ENCODE measurements at regions of chr1 and their contacts with region 1.

Region 1: DNA sequence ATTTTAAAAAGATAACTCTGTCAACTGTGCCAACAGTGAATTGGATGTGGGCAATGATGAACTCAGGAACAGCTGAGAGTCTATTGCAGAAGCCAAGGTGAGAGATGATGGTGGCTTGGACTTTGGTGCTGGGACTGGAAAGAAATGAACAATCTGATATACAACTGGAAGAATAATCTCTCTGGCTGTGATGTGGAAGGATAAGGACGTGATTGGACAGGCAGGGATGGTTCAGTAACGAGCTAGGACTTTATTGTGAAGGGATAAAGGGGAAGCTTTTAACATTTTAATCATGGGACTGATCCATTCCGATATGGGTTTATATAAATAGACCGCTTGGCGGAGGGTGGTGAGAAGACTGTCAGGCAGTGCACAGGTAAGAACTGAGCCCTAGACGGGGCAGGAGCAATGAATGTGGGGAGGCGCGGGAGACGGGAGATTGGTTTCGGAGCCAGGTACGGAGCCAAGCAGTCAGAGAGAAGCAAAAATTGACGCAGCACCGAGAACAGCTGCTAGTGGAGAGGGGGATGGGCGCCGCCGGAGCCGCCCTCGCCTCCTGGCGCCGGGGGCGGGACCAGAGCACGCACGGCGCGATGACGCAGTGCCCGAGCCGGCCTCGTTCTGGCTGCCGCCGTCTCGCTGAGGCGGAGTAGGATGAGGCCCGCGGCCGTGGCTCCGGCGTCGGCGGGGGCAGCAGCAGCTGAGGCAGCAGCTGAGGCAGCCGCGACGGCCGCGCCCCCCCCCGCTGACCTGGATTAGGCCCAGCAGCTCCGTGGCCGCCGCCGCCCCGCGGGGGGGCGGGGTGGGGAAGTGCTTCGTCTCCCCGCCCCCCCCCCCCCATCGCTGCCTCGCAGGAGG is at the start of gene RNF11:
- DNase-seq: peak; percentile 89 to 99 (median 92)

Region 2: DNA sequence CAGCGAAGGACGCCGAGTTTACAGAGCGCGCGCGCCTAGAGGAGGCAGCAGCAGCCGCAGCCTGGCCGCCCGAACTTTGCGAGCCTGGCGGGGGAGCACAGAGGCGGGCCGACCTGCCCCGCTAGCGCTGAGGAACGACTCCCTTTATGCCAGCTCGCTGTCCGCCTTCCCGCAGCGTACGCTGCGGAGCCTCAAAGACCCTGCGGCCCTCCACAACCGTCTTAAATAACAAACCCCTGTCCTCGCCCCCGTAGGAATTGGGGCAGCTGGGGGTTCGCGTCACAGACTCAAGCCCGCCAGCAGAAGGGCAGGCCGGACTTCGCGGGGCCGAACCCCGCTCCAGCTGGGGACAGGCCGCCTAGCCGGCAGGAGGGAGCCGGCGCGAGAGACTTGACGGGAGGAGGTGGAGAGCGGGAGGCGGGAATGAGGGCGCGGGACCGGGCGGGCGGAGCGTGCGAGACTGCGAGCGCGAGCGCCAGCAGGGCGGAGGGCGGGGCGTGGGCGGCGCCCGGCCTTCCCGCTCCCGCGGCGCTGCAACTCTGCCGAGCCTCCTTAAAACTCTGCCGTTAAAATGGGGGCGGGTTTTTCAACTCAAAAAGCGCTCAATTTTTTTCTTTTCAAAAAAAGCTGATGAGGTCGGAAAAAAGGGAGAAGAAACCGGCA is 267.6 kb before region 1 on chr1:
- intact Hi-C with region 1: loop called (anchors 5 kb)
- DNase-seq: peak; percentile 77 to 97 (median 85)

Region 3: DNA sequence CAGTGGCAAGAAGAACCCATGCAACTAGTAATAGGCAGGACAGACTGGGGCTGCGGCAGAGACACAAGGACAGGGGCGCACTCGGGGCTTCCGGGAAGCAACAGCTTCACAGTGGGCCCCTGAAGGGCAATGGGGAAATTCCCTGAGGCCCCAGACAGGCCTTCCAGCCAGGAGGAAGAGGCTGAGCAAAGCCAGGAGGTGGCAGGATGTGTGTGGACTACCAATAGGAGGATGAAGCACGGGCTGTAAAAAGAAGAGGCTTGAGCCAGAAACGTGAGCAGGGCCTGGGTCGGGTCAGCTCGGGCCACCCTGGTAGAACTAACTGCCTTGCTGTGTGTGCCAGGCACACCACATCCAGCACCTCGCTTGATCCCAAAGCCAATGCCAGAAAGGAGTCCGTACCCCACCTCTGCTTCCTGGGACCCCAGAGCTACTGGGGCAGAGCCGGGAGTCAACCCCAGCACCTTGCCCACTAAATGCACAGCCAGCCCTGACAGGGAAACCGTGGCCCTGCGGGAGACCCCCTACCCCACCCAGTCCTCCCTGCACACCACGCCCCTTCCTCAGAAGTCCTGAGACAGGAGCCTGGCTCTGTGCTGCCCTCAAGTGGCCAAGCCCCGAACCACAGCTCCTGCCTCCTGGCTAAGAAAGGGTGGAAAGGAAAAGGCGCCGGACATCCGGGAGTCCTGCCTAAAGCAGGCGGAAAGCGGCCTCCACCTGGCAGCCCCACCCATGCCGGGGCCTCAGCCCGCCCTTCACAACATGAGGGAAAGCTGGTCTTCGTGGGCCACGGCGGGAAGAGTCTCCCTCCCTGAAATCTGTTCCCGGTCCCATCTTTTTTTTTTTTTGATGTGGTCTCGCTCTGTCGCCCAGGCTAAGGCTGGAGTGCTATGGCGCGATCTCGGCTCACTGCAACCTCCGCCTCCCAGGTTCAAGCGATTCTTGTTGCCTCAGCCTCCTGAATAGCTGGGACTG is 60.8 kb after region 1 on chr1:
- intact Hi-C with region 1: loop called (anchors 5 kb)
- DNase-seq: peak; percentile 75 to 98 (median 86)

Region 4: DNA sequence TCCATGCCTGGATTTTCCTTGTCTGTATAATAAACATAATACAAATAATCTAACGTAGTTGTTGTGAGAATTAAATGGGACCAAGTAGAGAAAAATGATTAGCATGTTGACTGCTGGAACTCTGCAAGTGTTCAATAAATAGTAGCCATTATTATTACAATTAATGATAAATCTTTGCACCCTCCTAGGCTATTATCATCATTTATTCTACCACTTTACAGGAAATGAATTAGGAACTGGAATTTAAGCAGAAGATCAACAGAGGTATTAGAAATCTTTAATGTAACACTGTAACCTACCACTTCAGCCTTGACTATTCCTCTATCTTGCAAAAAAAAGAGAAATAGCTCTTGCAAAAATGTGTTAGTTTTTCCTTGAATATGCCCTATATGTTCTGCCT is 156.3 kb after region 1 on chr1:
- intact Hi-C with region 1: no loop called
- DNase-seq: no peak

Region 5: GRCh38 chr1:51535006-51535592 is 299.2 kb after region 1 on chr1:
- intact Hi-C with region 1: loop called (anchors 10 kb)
- DNase-seq: peak in 7 of 10 donors; percentile 27 to 92 (median 68)

Measured in posterior cingulate gyrus (tissue), 11 donors.